ENCODE measurements at regions of chr15 and their contacts with region 1.

Region 1: DNA sequence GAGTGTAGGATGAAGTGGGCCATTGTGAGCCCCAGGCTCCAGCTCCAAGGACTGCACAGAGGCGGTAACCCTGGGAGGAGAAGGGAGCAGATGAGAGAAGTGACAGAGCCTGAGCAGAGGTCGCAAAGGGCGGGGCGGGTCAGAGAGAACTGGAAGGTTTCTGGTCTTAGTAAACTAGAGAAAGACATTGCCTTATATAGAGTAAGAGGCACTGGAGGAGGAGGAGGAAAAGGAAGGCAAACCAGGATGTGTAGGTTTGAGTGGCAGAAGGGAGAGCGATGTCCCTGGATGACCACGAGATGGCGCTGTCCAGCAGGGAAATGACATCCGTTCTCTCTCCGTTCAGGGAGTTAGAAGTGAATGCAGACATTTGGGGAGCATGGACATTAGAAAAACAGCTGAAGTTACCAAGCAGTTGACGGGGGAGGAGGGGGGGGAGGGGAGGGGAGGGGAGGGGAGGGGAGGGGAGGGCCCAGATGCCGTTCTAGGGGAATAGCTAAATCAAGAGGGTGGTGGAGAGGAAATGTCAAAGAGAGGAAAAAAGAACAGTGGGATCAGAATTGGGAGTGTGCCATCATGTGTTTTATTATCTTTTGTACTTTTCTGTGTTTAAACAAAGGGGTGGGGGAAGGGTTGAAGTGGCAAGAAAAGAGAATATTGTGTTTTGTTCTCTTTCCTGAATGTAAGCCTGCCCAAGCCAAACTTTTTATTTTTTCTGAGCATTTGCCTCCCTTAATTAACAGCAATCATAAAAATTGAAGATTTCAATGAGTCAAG is 48.8 kb downstream of the STARD5 start:
- DNase-seq: peak; percentile 67 to 80
- ATAC-seq: peak; percentile 82 to 97
- H3K4me3 ChIP-seq: no peak overlapping the region
- H3K27ac ChIP-seq: no peak overlapping the region
- H3K4me1 ChIP-seq: no peaks in the 10 kb centered on the region
- CTCF ChIP-seq: peak; percentile 84
- EP300 ChIP-seq: no peak
- POLR2A ChIP-seq: no peak
- RAD21 ChIP-seq: peak; percentile 94 to 97

Region 2: GRCh38 chr15:81056304-81056703 is 218.8 kb before region 1 on chr15:
- CTCF ChIA-PET with region 1: no interaction called
- POLR2A ChIA-PET with region 1: no interaction called
- DNase-seq: no peak
- ATAC-seq: no peak
- H3K4me3 ChIP-seq: no peak overlapping the region
- H3K27ac ChIP-seq: no peak overlapping the region
- H3K4me1 ChIP-seq: no peaks in the 10 kb centered on the region
- CTCF ChIP-seq: no peak
- EP300 ChIP-seq: no peak
- POLR2A ChIP-seq: no peak
- RAD21 ChIP-seq: no peak

Region 3: DNA sequence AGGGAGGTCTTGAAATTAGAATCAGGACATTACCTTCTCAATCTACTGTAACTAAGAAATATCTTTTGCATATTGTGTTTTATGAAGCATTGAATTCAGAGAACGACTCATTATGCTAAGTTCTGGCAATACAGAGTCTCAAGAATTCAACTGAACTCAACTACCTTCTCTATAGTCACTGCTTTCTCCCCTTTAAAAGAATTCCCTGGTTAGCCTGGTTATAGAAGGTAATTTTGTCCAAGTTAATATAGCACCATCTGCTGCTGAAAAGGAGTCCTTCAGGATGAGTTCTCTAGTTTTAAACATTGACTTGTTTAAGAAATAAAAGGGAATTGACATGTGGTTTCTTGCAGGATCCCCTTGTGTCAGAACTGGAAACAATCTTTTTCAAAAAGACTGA is 18.2 kb before region 1 on chr15:
- CTCF ChIA-PET with region 1: interaction called, 14 read pairs
- POLR2A ChIA-PET with region 1: no interaction called
- DNase-seq: peak in 1 of 2 experiments; percentile 31
- ATAC-seq: peak; percentile 46; a peak in 2 of 6 replicates
- H3K4me3 ChIP-seq: no peak overlapping the region
- H3K27ac ChIP-seq: no peak overlapping the region
- H3K4me1 ChIP-seq: no peaks in the 10 kb centered on the region
- CTCF ChIP-seq: peak; percentile 30; the same call in 2 of the 3 replicates
- EP300 ChIP-seq: no peak
- POLR2A ChIP-seq: no peak
- RAD21 ChIP-seq: peak in 1 of 2 experiments; percentile 14; a peak in 1 of 5 replicates

Region 4: GRCh38 chr15:81301815-81302399 is 26.8 kb after region 1 on chr15:
- CTCF ChIA-PET with region 1: interaction called, 29 read pairs
- POLR2A ChIA-PET with region 1: no interaction called
- DNase-seq: no peak
- ATAC-seq: no peak
- H3K4me3 ChIP-seq: no peak overlapping the region
- H3K27ac ChIP-seq: no peak overlapping the region
- H3K4me1 ChIP-seq: peaks cover 13% of the 10 kb centered on the region
- CTCF ChIP-seq: no peak
- EP300 ChIP-seq: no peak
- POLR2A ChIP-seq: no peak
- RAD21 ChIP-seq: no peak

Region 5: GRCh38 chr15:81336568-81336967 is 61.4 kb after region 1 on chr15:
- CTCF ChIA-PET with region 1: interaction called, 14 read pairs
- POLR2A ChIA-PET with region 1: no interaction called
- DNase-seq: peak; percentile 21 to 36
- ATAC-seq: peak; percentile 35 to 76; a peak in 3 of 6 replicates
- H3K4me3 ChIP-seq: no peak overlapping the region
- H3K27ac ChIP-seq: no peak overlapping the region
- H3K4me1 ChIP-seq: peaks cover 13% of the 10 kb centered on the region; the same call in 2 of the 3 replicates
- CTCF ChIP-seq: peak; percentile 33; the same call in 1 of the 3 replicates
- EP300 ChIP-seq: no peak
- POLR2A ChIP-seq: no peak
- RAD21 ChIP-seq: peak; percentile 32 to 66; a peak in 2 of 5 replicates

Region 6: DNA sequence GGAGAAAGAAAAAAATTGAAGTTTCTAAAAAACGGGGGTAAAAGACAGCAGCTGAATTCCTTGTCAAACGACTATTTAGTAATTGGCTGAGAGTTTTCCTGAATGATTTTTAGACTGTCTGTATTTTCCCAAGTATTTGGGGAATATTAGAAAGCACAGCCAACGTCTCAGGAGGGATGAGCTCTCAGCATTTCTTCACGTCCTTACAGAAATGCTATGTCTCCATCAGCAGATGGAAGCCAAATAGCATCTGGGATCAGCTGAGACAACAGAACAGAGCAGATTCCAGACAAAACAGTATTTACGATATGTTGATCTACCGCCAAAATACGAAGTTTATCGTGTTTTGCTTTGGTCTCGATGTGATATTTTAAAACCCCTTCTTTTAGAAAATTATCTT is 104.2 kb after region 1 on chr15:
- CTCF ChIA-PET with region 1: interaction called, 12 read pairs
- POLR2A ChIA-PET with region 1: no interaction called
- DNase-seq: no peak
- ATAC-seq: no peak
- H3K4me3 ChIP-seq: no peak overlapping the region
- H3K27ac ChIP-seq: no peak overlapping the region
- H3K4me1 ChIP-seq: no peaks in the 10 kb centered on the region
- CTCF ChIP-seq: no peak
- EP300 ChIP-seq: no peak
- POLR2A ChIP-seq: no peak
- RAD21 ChIP-seq: no peak

Region 7: GRCh38 chr15:81410318-81410753 is 135.2 kb after region 1 on chr15:
- CTCF ChIA-PET with region 1: interaction called, 76 read pairs
- POLR2A ChIA-PET with region 1: no interaction called
- DNase-seq: peak; percentile 36 to 73
- ATAC-seq: peak; percentile 76 to 87
- H3K4me3 ChIP-seq: no peak overlapping the region
- H3K27ac ChIP-seq: no peak overlapping the region
- H3K4me1 ChIP-seq: no peaks in the 10 kb centered on the region
- CTCF ChIP-seq: peak; percentile 66
- EP300 ChIP-seq: no peak
- POLR2A ChIP-seq: no peak
- RAD21 ChIP-seq: peak; percentile 73 to 78